ENCODE measurements at regions of chr9 and their contacts with region 1.

Region 1: DNA sequence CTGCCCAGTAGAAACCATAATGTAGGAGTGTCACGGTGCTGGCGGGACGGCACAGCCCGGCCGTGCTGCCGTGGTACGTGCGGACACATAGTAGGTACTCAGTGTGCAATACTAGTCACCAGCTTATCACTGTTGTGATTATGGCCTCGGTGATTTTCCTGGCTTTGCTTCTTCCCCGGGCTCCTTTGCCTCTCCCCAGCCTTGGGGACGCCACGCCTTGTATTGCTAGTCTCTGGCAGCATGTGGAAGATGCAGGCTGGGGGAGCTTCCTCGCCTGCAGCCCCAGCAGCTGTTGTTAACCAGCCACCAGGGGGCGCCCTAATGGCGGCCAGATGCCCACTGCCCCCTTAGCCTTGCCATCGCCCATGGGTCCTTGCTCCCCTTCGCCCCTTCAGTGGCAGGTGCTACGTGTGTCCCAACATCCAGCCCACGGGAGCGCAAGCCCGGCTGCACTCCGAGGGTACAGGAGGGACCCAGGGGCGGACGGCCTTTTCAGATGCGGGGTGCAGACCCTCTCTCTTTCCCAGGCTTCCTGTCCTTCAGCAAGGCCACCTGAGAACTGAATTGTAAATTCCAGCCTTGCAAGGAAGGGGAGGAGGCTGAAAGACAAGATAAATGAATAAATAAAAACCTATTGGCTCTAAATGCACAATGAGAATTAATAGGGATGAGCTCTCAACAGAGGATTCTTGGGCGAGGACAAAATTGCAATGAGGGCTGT is 8.0 kb downstream of the NTNG2 start:
- DNase-seq: peak; percentile 73
- H3K4me3 ChIP-seq: no peak overlapping the region
- H3K27ac ChIP-seq: no peak overlapping the region
- H3K4me1 ChIP-seq: no peaks in the 10 kb centered on the region
- H3K27me3 ChIP-seq: peaks cover 29% of the 10 kb centered on the region
- CTCF ChIP-seq: peak; percentile 93

Region 2: DNA sequence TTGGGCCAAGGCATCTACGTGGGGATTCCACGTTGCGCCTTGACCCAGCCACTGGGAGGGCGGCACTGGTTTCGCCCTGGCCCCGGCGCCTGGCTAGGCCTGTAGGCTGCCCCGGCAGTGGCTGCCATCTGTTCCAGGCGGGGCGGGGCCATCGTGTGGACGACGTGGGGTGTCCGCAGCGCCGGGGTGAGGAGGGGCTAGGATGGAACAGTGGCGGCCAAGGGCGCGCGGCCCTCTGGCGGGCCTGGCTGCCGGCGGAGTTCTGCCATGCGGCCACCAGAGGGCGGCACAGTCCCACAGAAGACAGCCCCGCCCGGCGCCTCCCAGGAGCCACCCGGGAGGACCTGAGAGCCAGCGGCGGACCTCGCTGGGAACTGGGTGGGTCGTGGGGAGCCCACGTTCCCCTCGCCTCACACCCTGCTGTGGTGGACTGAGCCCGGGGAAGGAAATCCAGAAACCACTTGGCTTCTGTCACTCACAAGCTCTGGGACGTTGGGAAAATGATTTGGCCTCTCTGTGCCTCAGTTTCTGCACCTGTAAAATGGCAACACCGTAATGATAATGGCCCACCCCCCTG is 407.4 kb before region 1 on chr9:
- CTCF ChIA-PET with region 1: interaction called, 3 read pairs
- POLR2A ChIA-PET with region 1: no interaction called
- intact Hi-C with region 1: loop called (anchors 5 kb)
- DNase-seq: peak; percentile 73
- H3K4me3 ChIP-seq: no peak overlapping the region
- H3K27ac ChIP-seq: no peak overlapping the region
- H3K4me1 ChIP-seq: no peaks in the 10 kb centered on the region
- H3K27me3 ChIP-seq: peaks cover 35% of the 10 kb centered on the region
- CTCF ChIP-seq: peak; percentile 91

Region 3: DNA sequence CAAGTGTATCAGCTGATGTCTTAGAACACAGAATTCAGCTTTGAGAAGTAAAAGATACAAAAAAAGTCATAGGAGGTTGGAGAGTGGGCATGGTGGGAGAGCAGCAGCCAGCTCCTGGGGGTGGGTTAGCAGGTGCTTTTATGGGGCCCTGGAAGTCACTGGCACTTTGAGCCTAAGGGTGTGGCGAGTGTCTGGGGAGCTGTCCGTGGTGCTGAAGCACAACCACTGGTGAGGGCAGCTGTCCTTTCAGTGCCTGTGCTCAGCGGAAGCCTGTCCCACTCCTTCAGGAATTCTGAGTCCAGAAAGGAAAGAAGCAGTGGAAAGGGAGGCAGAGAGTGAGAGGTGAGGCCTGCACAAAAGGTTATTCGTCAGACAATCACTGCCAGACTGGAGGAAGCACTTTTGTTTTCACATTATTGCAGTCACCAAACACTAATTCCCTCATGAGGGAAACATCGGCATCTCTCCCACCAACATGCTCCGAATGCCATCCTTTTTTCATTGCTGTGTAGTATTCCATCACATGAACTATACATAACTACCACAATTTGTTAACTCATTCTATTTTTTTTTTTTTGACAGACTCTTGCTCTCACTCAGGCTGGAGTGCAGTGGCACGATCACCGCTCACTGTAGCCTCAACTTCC is 370.5 kb before region 1 on chr9:
- CTCF ChIA-PET with region 1: no interaction called
- POLR2A ChIA-PET with region 1: interaction called, 13 read pairs
- intact Hi-C with region 1: no loop called
- DNase-seq: peak; percentile 58
- H3K4me3 ChIP-seq: no peak overlapping the region
- H3K27ac ChIP-seq: no peak overlapping the region
- H3K4me1 ChIP-seq: no peaks in the 10 kb centered on the region
- H3K27me3 ChIP-seq: peaks cover 41% of the 10 kb centered on the region
- CTCF ChIP-seq: no peak

Region 4: GRCh38 chr9:132182314-132183091 is 12.7 kb after region 1 on chr9:
- CTCF ChIA-PET with region 1: interaction called, 10 read pairs
- POLR2A ChIA-PET with region 1: no interaction called
- intact Hi-C with region 1: no loop called
- DNase-seq: peak; percentile 71
- H3K4me3 ChIP-seq: peak overlapping the region; percentile 3
- H3K27ac ChIP-seq: peak overlapping the region; percentile 50
- H3K4me1 ChIP-seq: peaks cover 54% of the 10 kb centered on the region
- H3K27me3 ChIP-seq: no peaks in the 10 kb centered on the region
- CTCF ChIP-seq: peak; percentile 52

Region 5: GRCh38 chr9:132235946-132236661 is 66.3 kb after region 1 on chr9:
- CTCF ChIA-PET with region 1: interaction called, 36 read pairs
- POLR2A ChIA-PET with region 1: no interaction called
- intact Hi-C with region 1: loop called (anchors 1 kb)
- DNase-seq: peak; percentile 79
- H3K4me3 ChIP-seq: no peak overlapping the region
- H3K27ac ChIP-seq: no peak overlapping the region
- H3K4me1 ChIP-seq: peaks cover 31% of the 10 kb centered on the region
- H3K27me3 ChIP-seq: no peaks in the 10 kb centered on the region
- CTCF ChIP-seq: peak; percentile 98

Region 6: DNA sequence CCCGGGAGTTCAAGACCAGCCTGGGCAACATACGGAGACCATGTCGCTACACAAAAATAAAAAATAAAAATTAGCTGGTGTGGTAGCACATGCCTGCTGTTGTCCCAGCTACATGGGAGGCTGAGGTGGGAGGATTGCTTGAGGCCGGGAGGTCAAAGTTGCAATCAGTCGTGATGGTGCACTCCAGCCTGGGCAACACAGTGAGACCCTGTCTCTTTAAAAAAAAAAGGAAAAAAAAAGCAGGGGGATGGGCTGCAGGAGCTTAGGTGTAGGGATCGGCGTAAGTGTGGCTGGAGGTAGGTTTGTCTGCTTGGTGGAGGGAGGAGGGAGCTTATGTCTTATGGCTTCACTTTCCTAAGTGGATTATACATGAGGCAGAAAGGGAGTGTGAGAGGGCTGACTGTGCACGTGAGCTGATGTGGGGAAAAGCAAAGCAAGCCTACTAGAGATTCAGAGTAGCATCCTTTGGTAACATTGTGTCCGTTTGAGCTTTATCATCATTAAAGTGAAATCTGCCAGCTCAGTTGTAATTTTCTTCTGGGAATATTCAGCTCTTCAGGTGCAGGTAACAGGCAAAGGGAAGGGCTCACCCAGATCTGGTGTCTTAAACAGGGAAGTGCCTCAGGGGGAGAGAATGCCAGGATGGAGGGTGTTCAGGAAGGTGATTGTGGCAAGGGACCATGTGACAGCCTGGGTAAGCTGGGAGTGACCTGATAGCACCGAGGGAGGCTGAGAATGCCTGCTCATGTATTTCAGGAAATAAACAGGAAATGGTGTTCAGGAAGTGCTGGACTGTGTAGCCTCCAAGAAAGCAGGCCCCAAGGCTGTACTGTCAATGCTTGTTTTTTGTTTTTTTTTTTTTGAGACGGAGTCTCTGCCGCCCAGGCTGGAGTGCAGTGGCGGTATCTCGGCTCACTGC is 202.6 kb after region 1 on chr9:
- CTCF ChIA-PET with region 1: no interaction called
- POLR2A ChIA-PET with region 1: no interaction called
- intact Hi-C with region 1: no loop called
- DNase-seq: peak; percentile 67
- H3K4me3 ChIP-seq: no peak overlapping the region
- H3K27ac ChIP-seq: no peak overlapping the region
- H3K4me1 ChIP-seq: peaks cover 7% of the 10 kb centered on the region
- H3K27me3 ChIP-seq: no peaks in the 10 kb centered on the region
- CTCF ChIP-seq: no peak